Activated T-helper 1 cell treated with anti-CD3 and anti-CD28 coated beads, Interleukin-12 subunit alpha, Interleukin-12 subunit beta, Interleukin-2, Interleukin-4 antibody, amounts not matched to agents 30 ng/mL and 10 ng/mL and 1 ng/mL, durations not matched to agents 14 hours and 24 hours and 36 hours (primary cell): ENCODE measurements at regions of chr1 and their contacts with region 1.

Region 1: GRCh38 chr1:66764994-66765578 is 12.8 kb downstream of the DYNLT5 start:
- DNase-seq: peak; percentile 20
- H3K4me3 Mint-ChIP-seq: no peak overlapping the region
- H3K27ac Mint-ChIP-seq: no peak overlapping the region
- H3K4me1 Mint-ChIP-seq: peaks cover 28% of the 10 kb centered on the region
- H3K27me3 Mint-ChIP-seq: no peaks in the 10 kb centered on the region

Region 2: GRCh38 chr1:66924756-66925557 is 159.9 kb after region 1 on chr1 and contains the starts of genes DNAI4 and MIER1:
- intact Hi-C with region 1: loop called (anchors 1 kb)
- DNase-seq: peak; percentile 98
- H3K4me3 Mint-ChIP-seq: peak within 1 kb of the TSS; percentile 93
- H3K27ac Mint-ChIP-seq: peak within 1 kb of the TSS; percentile 97
- H3K4me1 Mint-ChIP-seq: peaks cover 66% of the 10 kb centered on the region
- H3K27me3 Mint-ChIP-seq: no peaks in the 10 kb centered on the region
- total RNA-seq, gene DNAI4: 1.2 and 3.2 TPM in 2 replicates
- total RNA-seq, gene MIER1: 53.2 and 57.4 TPM in 2 replicates

Region 3: DNA sequence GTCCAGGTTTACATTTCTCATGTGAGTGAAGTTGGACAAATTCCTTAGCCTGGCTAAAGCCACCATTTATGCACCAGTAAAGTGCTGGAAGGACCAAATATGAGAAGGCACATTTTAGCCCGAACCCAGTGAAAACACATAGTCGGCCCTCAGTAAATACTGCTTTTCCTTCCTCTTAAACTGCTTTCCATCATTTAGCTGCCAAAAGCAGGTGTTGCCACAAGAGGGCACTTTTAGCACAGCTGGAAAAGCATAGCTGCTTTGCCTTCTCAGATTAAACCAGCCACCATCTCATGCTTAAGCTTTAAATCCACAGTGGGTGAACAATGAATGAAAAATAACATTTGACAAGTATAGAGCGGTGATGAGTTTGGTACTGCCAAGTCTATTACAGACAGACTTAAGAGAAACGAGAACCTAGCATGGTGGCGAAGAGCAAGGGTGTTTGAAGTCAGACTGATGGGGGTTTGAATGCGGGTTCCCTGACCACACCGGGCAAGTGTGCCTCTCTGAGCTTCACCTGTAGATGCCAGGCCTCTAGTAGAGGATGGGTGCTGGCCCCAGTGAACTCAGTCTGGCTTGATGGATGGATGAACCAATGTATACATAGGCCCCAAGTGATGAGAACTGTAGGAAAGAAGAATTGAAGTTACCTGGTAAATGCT is 231.1 kb after region 1 on chr1:
- intact Hi-C with region 1: loop called (anchors 1 kb)
- DNase-seq: peak; percentile 56
- H3K4me3 Mint-ChIP-seq: no peak overlapping the region
- H3K27ac Mint-ChIP-seq: peak overlapping the region; percentile 45
- H3K4me1 Mint-ChIP-seq: peaks cover 22% of the 10 kb centered on the region
- H3K27me3 Mint-ChIP-seq: no peaks in the 10 kb centered on the region

Region 4: GRCh38 chr1:67149179-67149770 is 384.2 kb after region 1 on chr1:
- intact Hi-C with region 1: loop called (anchors 1 kb)
- DNase-seq: peak; percentile 42
- H3K4me3 Mint-ChIP-seq: no peak overlapping the region
- H3K27ac Mint-ChIP-seq: peak overlapping the region; percentile 40
- H3K4me1 Mint-ChIP-seq: peaks cover 56% of the 10 kb centered on the region
- H3K27me3 Mint-ChIP-seq: no peaks in the 10 kb centered on the region